ENCODE measurements at regions of chr3 and their contacts with region 1.

Region 1: DNA sequence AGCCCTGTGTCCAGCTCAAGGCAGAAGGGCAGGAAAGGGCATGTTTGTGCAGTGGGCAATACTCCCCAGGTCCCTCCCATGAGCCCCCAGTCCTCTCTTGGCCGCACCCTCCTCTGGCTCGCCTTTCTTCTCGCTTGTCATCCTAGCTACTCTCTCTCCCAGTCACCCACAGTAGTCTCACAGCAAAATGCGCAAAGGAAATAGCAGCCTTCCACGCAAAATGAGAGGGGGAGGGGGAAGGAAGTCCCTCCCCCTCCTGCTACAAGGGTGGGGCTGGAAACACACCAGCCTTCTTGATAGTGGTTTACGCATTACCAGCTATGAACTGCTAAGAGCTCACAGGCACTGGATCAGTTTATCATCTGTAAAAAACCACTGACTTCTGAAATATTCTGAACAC is 83.8 kb downstream of the GADL1 start:
- DNase-seq: no peak

Region 2: DNA sequence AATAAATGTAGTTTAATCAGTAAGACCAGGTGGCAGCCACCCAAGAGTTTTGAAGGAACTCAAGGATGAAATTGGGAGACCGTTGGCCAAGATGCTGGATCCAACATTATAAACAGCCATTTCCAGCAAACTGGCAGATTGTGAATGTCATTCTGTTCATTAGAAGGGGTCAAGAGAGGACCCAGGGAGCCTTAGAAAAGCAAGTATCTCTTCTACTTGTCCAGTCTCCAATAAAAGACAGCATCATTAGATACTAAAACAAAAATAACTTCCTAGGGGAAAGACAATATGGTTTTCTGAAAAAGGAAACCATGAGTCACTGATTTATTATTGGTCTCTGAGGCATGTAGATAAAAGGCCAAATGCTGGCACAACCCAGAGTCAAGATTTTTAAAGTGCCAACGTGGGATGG is 15.9 kb after region 1 on chr3:
- intact Hi-C with region 1: loop called (anchors 2 kb)
- DNase-seq: no peak

Region 3: DNA sequence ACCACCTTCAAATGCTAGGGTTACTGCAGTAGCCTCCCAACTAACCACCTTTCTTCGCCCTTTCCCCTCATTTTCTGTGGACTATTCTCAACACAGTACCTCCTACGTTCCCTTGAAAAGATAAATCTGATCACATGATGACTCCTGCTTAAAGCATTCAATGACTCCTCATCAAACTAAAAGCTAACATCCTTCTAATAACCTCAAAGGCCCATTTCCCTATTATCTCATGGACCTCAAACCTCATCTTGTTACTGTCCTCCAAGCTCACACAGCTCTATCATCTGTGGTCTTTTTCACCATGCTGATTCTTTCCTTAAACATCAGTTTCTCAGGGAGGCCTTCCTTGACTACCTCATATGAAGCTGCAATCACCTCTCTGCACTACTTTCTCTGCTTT is 54.2 kb after region 1 on chr3:
- intact Hi-C with region 1: loop called (anchors 5 kb)
- DNase-seq: no peak